ENCODE measurements at regions of chr11 and their contacts with region 1.

Region 1: GRCh38 chr11:111777094-111778046 is 11.2 kb upstream of the PPP2R1B start:
- DNase-seq: no peak
- ATAC-seq: peak; percentile 74 to 76
- H3K4me3 ChIP-seq: no peak overlapping the region
- H3K27ac ChIP-seq: no peak overlapping the region
- H3K4me1 ChIP-seq: no peaks in the 10 kb centered on the region
- H3K27me3 ChIP-seq: no peaks in the 10 kb centered on the region

Region 2: GRCh38 chr11:111586388-111586831 is 191.0 kb before region 1 on chr11:
- intact Hi-C with region 1: loop called in 1 of 4 experiments (anchors 10 kb)
- DNase-seq: no peak
- ATAC-seq: peak in 1 of 2 donors; percentile 44
- H3K4me3 ChIP-seq: no peak overlapping the region
- H3K27ac ChIP-seq: no peak overlapping the region
- H3K4me1 ChIP-seq: peaks cover 2% of the 10 kb centered on the region
- H3K27me3 ChIP-seq: no peaks in the 10 kb centered on the region

Region 3: GRCh38 chr11:111601979-111602864 is 175.1 kb before region 1 on chr11 and contains the start of gene SIK2:
- intact Hi-C with region 1: loop called (anchors 2 to 5 kb)
- DNase-seq: peak; percentile 97 to 98 (median 98)
- ATAC-seq: peak; percentile 97 to 98
- H3K4me3 ChIP-seq: peak within 1 kb of the TSS; percentile 91
- H3K27ac ChIP-seq: peak within 1 kb of the TSS; percentile 86
- H3K4me1 ChIP-seq: no peaks in the 10 kb centered on the region
- H3K27me3 ChIP-seq: no peaks in the 10 kb centered on the region
- total RNA-seq, gene SIK2: 18.0 to 51.7 (median 21.9) TPM

Region 4: GRCh38 chr11:111635706-111636045 is 141.7 kb before region 1 on chr11:
- intact Hi-C with region 1: no loop called
- DNase-seq: peak; percentile 57 to 84 (median 58)
- ATAC-seq: peak; percentile 91 to 98
- H3K4me3 ChIP-seq: no peak overlapping the region
- H3K27ac ChIP-seq: peak overlapping the region; percentile 70
- H3K4me1 ChIP-seq: peaks cover 4% of the 10 kb centered on the region
- H3K27me3 ChIP-seq: no peaks in the 10 kb centered on the region

Region 5: GRCh38 chr11:111730871-111731591 is 46.3 kb before region 1 on chr11:
- intact Hi-C with region 1: no loop called
- DNase-seq: peak; percentile 59 to 83 (median 78)
- ATAC-seq: peak; percentile 24 to 36
- H3K4me3 ChIP-seq: no peak overlapping the region
- H3K27ac ChIP-seq: peak overlapping the region; percentile 64
- H3K4me1 ChIP-seq: peaks cover 46% of the 10 kb centered on the region
- H3K27me3 ChIP-seq: no peaks in the 10 kb centered on the region

Region 6: GRCh38 chr11:111833524-111833923 is 56.2 kb after region 1 on chr11:
- intact Hi-C with region 1: loop called in 3 of 4 experiments (anchors 5 to 10 kb)
- DNase-seq: no peak
- ATAC-seq: peak in 1 of 2 donors; percentile 31
- H3K4me3 ChIP-seq: no peak overlapping the region
- H3K27ac ChIP-seq: no peak overlapping the region
- H3K4me1 ChIP-seq: peaks cover 2% of the 10 kb centered on the region
- H3K27me3 ChIP-seq: no peaks in the 10 kb centered on the region